AG04450 (cell line): ENCODE measurements at regions of chr2 and their contacts with region 1.

Region 1: GRCh38 chr2:69196327-69197117 is 183.5 kb downstream of the ANTXR1 start:
- DNase-seq: peak; percentile 92
- H3K4me3 ChIP-seq: no peak overlapping the region
- H3K27ac ChIP-seq: peak overlapping the region; percentile 99
- H3K27me3 ChIP-seq: no peaks in the 10 kb centered on the region
- CTCF ChIP-seq: no peak

Region 2: DNA sequence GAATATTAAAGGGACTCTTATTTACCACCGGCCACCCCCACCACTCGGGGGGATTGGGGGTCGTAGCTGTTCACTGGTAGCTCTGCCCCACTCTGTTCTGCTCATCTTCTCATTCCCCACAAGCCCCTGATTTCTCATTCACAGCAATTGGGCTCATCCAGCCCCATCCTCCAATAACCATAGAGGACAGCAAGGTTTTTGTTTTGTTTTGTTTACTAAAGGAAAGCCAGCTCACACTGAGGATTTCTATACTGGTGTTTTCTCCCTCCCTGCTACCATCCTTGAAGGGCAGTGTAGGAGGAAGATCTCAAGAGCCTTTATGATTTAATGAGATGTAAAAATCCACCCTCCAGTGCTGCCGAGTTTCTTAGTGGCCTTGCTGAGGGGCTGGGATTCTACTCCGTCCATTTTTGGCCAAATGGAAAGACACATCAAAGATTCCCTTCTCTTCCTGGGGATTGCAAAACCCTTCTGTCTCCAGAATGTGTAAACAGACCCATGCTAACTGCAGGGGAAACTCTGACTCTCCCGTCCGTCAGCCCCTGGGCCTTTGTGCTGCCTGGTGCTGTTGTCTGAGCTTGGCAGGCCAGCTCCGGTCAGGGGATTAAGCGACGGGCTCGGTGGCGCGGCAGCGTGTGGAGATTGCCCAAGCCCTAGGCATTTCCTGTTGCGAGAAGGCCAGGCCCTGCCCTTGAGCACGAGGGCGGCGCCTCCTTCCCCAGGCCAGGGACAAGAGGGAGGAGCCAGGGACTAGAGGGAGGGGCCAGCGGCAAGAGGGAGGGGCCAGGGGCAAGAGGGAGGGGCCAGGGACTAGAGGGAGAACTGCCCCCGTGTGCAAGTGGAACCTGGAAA is 18.5 kb before region 1 on chr2:
- CTCF ChIA-PET with region 1: no interaction called
- POLR2A ChIA-PET with region 1: interaction called, 19 read pairs
- DNase-seq: peak; percentile 82
- H3K4me3 ChIP-seq: peak overlapping the region; percentile 34
- H3K27ac ChIP-seq: peak overlapping the region; percentile 99
- H3K27me3 ChIP-seq: no peaks in the 10 kb centered on the region
- CTCF ChIP-seq: no peak

Region 3: DNA sequence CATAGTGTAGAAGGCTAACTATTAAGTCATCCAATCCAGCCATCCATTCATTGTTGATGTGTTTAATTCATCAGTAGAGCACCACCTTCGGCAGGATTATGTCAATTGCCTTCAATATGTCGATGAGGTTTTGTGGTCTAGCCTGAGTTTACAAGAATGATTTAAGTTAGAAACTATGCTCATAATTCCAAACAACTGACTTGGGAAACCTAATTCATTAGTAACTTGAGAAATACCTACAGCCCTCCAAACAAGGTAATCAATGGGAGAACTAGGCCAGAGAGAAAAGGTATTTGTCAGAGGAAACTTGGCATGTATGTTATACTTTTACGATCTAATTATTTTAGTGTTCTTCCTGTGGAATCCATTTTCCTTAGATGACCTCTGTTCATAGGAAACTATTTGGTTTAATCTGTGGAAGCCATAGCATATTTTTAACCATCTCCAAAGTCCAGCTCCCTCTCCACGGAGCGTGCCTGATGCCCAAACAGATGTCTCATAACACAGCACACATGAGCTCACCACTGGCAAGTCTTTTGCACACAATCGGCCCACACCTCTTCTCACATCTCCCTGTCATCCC is 42.0 kb after region 1 on chr2:
- CTCF ChIA-PET with region 1: interaction called, 4 read pairs
- POLR2A ChIA-PET with region 1: interaction called, 15 read pairs
- DNase-seq: peak; percentile 89
- H3K4me3 ChIP-seq: no peak overlapping the region
- H3K27ac ChIP-seq: peak overlapping the region; percentile 65
- H3K27me3 ChIP-seq: no peaks in the 10 kb centered on the region
- CTCF ChIP-seq: peak; percentile 23; the same call in 1 of the 2 replicates

Region 4: GRCh38 chr2:69291004-69291650 is 94.6 kb after region 1 on chr2:
- CTCF ChIA-PET with region 1: no interaction called
- POLR2A ChIA-PET with region 1: no interaction called
- DNase-seq: peak; percentile 29
- H3K4me3 ChIP-seq: no peak overlapping the region
- H3K27ac ChIP-seq: peak overlapping the region; percentile 22
- H3K27me3 ChIP-seq: no peaks in the 10 kb centered on the region
- CTCF ChIP-seq: no peak